Calu3 (cell line): ENCODE measurements at regions of chr18 and their contacts with region 1.

Region 1: DNA sequence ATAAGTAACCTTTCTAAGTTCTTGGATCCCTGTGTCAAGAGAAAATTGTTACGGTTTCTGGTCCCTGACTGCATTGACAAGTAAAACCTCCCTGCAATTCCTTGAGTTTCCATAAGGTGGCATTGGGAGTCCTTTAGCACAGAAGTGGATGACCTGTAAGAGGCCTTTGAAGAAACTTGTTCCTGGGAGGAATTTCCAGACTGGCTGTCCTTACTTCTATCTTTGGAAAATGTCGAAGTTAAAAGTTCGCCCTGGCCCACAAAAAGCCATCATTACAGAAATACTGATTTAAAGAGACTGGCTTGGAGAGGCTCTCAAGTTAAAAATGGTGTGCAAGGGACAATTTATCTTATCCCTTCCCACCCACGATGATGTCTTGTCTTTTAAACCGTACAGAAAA is 218.4 kb downstream of the CDH20 start:
- DNase-seq: peak; percentile 66
- H3K4me3 Mint-ChIP-seq: no peak overlapping the region
- H3K27ac Mint-ChIP-seq: no peak overlapping the region
- H3K4me1 Mint-ChIP-seq: no peaks in the 10 kb centered on the region
- H3K27me3 Mint-ChIP-seq: no peaks in the 10 kb centered on the region
- CTCF ChIP-seq: peak; percentile 69

Region 2: GRCh38 chr18:61901323-61901986 is 349.9 kb after region 1 on chr18:
- CTCF ChIA-PET with region 1: no interaction called
- intact Hi-C with region 1: loop called (anchors 2 kb)
- DNase-seq: peak; percentile 44
- H3K4me3 Mint-ChIP-seq: no peak overlapping the region
- H3K27ac Mint-ChIP-seq: no peak overlapping the region
- H3K4me1 Mint-ChIP-seq: peaks cover 25% of the 10 kb centered on the region
- H3K27me3 Mint-ChIP-seq: no peaks in the 10 kb centered on the region
- CTCF ChIP-seq: peak; percentile 89